Sigmoid colon (tissue), 7 donors: ENCODE measurements at regions of chr5 and their contacts with region 1.

Region 1: DNA sequence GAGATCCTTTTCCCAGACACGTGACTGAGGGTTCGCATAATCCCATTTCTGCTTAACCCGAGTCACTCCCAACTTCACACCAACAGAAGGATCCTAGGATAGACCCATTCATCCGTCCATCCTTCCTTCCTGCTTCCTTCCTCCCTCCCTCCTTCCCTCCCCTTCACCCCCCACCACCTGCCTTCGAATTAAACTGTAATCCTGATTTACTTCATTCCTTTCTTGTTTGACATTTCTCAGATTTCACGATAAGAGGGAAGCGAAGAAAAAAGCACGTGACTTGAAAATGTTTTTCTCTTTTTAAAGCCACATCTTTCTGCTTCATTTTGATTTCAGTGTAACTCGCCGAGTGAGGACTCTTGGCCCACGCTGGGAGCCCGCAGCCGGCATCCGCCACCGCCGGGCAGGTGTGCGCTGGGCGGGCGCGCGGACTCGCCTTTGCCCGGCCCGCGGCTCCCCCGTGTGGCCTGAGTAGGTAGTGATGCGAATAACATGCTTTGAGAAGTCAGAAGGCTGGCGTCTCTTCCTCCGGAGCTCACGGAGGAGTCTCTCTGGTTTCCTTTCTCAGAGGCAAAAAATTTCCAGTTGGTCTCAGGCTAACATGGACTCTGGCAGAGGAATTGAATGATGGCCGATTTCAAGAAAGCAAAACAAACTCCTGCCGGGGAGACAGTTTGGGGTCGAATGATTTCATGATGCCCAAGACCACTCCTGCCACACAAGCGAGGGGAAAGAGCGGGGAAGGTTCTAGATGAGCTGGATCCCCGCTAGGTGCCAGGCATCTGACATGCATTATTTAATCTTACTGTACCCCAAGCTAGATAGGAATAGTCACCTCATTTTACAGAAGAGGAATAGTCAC is 117.7 kb downstream of the SLC12A2 start:
- DNase-seq: peak; percentile 89
- H3K4me3 ChIP-seq: peak overlapping the region in 2 of 4 donors; percentile 19 to 24
- H3K27ac ChIP-seq: no peak overlapping the region
- H3K4me1 ChIP-seq: peaks cover 0 to 9% (median 6%) of the 10 kb centered on the region in 4 donors
- H3K27me3 ChIP-seq: peaks cover 0 to 2% (median 0%) of the 10 kb centered on the region in 3 donors
- CTCF ChIP-seq: peak; percentile 73 to 88 (median 78)
- EP300 ChIP-seq: no peak
- POLR2A ChIP-seq: no peak

Region 2: GRCh38 chr5:127564002-127564769 is 637.1 kb before region 1 on chr5:
- intact Hi-C with region 1: loop called (anchors 1 kb)
- DNase-seq: no peak
- H3K4me3 ChIP-seq: no peak overlapping the region
- H3K27ac ChIP-seq: peak overlapping the region in 2 of 4 donors; percentile 9 to 56
- H3K4me1 ChIP-seq: peaks cover 0 to 32% (median 22%) of the 10 kb centered on the region in 4 donors
- H3K27me3 ChIP-seq: no peaks in the 10 kb centered on the region
- CTCF ChIP-seq: peak; percentile 26 to 66 (median 51)
- EP300 ChIP-seq: no peak
- POLR2A ChIP-seq: no peak

Region 3: DNA sequence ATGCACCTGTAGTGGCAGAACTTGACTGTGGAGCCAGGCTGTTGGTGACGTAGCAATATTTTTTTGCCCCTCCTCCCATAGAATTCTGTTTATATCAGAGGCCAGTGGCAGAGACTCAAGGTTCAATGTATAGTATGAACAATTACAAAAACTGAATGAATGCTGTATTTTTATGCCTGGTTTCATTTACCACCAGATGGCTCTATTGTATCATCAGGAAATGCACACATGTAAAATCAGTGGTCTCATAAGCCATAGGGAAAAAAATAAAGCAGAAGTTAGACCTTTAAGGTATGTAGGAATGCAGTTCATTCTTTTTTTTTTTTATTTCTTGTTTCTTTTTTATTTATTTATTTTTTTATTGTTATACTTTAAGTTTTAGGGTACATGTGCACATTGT is 454.5 kb before region 1 on chr5:
- intact Hi-C with region 1: loop called (anchors 1 kb)
- DNase-seq: no peak
- H3K4me3 ChIP-seq: no peak overlapping the region
- H3K27ac ChIP-seq: no peak overlapping the region
- H3K4me1 ChIP-seq: no peaks in the 10 kb centered on the region
- H3K27me3 ChIP-seq: no peaks in the 10 kb centered on the region
- CTCF ChIP-seq: peak; percentile 11 to 64 (median 37)
- EP300 ChIP-seq: no peak
- POLR2A ChIP-seq: no peak

Region 4: GRCh38 chr5:128074171-128074570 is 127.1 kb before region 1 on chr5:
- intact Hi-C with region 1: no loop called
- DNase-seq: no peak
- H3K4me3 ChIP-seq: no peak overlapping the region
- H3K27ac ChIP-seq: no peak overlapping the region
- H3K4me1 ChIP-seq: peaks cover 0 to 19% (median 7%) of the 10 kb centered on the region in 4 donors
- H3K27me3 ChIP-seq: no peaks in the 10 kb centered on the region
- CTCF ChIP-seq: no peak
- EP300 ChIP-seq: no peak
- POLR2A ChIP-seq: no peak